ENCODE measurements at regions of chr10 and their contacts with region 1.

Region 1: DNA sequence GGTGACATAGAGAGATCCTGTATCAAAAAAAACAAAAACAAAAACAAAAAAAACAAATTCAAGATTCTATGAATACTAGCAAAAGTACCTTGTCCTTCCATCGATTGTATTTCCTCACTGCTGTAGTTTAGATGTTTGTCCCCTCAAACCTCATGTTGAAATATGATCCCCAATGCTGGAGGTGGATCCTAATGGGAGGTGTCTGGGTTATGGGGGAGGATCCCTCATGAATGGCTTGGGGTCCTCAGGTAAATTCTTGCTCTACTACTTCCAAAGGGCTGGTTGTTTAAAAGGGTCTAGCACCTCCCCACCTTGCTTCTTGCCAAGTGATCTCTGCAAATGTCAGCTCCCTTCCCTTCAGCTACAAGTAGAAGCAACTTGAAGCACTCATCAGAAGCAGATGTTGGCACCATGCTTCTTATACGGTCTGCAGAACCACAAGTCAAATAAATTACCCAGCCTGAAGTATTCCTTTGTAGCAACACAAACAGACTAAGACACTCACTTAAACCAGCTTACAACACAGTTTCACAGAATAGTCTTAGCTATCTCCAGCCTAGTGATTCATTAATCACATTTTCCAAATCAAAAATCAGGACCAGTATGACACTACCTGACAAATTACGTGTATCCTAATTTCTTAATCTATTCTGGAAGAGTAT is 20.7 kb downstream of the ABI1 start:
- DNase-seq: no peak
- H3K4me3 Mint-ChIP-seq: no peak overlapping the region
- H3K27ac Mint-ChIP-seq: no peak overlapping the region
- H3K4me1 Mint-ChIP-seq: peaks cover 64% of the 10 kb centered on the region
- H3K27me3 Mint-ChIP-seq: no peaks in the 10 kb centered on the region

Region 2: DNA sequence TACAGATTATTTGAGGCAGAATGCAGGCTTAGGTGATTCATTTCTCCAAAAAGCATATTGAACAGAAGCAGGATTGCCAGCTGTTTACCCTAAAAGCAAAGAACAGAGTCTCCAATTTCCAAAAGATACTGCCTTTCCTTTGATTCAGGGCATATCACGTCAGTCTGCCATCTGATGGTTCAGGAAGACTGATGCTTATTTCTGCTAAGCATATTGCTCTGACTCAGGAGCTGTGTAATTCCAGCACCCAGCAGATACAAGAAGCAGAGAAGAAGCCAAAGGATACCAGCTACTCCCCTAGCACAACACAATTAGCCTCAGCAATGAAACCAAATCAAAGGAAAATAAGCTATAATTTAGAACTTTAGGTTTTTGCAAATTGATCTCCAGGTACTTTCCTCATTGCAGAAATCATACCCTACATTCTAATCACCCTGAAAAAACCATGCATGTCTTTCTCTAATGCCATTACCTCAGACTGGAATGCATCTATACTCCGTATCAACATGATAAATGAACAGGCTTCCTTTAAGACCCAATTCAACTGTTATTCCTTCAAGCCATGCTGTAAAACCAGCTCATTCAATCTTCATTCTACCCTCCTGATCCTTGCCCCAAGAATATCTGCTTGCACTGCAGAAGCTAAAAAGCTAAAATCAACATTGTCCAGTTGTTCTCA is 34.4 kb before region 1 on chr10:
- CTCF ChIA-PET with region 1: no interaction called
- intact Hi-C with region 1: loop called (anchors 1 kb)
- DNase-seq: peak; percentile 22
- H3K4me3 Mint-ChIP-seq: no peak overlapping the region
- H3K27ac Mint-ChIP-seq: no peak overlapping the region
- H3K4me1 Mint-ChIP-seq: peaks cover 71% of the 10 kb centered on the region
- H3K27me3 Mint-ChIP-seq: no peaks in the 10 kb centered on the region

Region 3: DNA sequence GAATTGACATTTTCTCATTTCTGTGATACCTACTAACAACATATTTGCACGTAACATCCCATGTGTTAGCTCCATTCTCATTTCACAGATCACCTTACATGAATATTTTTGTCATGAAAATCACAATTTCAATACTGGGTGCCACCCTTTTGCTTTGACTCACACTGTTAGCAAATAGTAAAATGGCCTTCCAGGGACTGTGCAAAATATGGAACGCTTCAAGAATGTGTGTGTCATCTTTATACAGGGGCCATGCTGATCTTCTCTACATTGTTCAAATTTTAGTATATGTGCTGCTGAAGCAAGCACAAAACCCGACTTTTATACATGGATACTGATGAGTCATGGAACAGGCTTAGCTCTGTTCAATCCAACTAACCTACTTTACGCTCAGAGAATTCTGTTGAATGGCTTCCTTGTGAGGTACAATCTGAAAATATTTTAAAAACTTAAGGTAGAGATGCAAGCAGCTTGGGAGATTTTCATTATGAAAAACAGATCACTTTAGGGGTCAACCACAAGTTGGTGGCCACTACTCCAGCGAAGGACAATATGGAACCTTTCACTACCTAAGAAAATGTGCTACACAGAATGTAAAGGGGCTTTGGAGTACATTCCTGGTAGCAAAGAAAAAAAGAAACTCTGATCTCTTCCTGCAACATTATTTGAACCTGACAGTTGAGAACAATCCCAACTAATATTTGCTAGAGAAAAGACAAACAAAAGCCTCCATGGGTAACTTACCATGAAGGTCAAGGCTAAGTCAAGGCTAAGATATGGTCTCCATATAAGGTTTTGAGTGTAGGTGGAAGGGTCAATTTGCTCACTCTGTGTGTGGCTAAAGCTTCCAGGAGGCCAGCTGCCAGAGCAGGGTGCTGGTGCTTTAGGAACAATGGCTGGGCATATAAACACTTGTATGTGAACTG is 248.3 kb after region 1 on chr10:
- CTCF ChIA-PET with region 1: no interaction called
- intact Hi-C with region 1: no loop called
- DNase-seq: no peak
- H3K4me3 Mint-ChIP-seq: no peak overlapping the region
- H3K27ac Mint-ChIP-seq: no peak overlapping the region
- H3K4me1 Mint-ChIP-seq: no peaks in the 10 kb centered on the region
- H3K27me3 Mint-ChIP-seq: no peaks in the 10 kb centered on the region